HEK293 (cell line): ENCODE measurements at regions of chr22 and their contacts with region 1.

Region 1: DNA sequence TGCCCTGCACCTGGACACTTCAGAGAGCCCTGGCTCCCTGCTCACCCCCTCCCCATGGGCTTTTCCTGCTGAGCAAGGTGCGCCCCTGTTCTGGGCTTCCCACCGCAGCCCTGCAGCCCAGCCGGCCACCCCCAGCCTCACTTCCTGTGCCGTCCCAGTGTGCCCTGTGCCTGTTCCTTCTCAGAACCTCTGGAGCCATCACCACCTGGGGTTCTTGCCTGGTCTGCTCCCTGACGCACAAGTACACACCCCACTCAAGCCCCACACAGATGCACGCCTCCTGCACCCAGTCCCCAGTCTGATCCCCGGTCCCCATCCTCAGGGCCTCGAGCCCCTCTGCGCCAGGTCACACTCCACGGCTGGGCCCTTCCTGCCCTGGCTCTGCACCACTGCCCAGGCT is 23.9 kb upstream of the DGCR8 start:
- H3K4me3 ChIP-seq: no peak overlapping the region
- H3K27ac ChIP-seq: no peak overlapping the region
- H3K4me1 ChIP-seq: no peaks in the 10 kb centered on the region
- CTCF ChIP-seq: no peak

Region 2: GRCh38 chr22:20044495-20045151 is 11.5 kb before region 1 on chr22:
- CTCF ChIA-PET with region 1: no interaction called
- POLR2A ChIA-PET with region 1: interaction called, 10 read pairs
- H3K4me3 ChIP-seq: no peak overlapping the region
- H3K27ac ChIP-seq: no peak overlapping the region
- H3K4me1 ChIP-seq: no peaks in the 10 kb centered on the region
- CTCF ChIP-seq: no peak

Region 3: DNA sequence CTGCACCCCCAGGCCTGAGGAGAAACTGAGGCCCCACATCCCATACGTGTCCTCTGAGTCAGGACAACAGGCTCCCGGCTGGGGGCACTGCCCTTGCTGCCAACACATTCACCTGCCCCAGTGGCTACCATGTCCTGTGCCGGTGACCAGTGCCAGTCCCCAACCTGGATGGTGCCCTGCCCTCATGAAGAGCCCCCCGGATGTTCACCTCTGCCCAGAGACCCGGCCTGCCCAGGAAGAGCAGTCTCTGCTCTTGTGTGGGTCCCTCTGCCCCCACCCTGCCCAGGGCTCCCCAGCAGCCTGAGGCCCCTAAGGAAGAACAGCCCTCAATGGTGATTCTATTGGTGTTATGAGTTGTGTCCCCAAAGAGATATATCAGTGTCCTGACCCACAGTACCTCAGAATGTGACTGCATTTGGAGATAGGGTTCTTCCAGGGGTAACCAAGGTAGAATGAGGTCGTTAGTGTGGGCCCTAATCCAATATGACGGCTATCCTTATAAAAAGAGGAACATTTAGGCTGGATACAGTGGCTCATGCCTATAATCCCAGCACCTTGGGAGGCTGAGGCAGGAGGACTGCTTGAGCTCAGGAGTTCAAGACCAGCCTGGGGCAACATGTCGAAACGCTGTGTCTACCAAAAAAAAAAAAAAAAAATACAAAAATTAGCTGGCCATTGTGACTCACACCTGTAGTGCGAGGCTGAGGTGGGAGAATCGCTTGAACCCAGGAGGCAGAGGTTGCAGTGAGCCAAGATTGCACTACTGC is 10.6 kb after region 1 on chr22:
- CTCF ChIA-PET with region 1: no interaction called
- POLR2A ChIA-PET with region 1: no interaction called
- H3K4me3 ChIP-seq: no peak overlapping the region
- H3K27ac ChIP-seq: no peak overlapping the region
- H3K4me1 ChIP-seq: no peaks in the 10 kb centered on the region
- CTCF ChIP-seq: no peak